ENCODE measurements at regions of chr6 and their contacts with region 1.

Region 1: GRCh38 chr6:90940812-90941481 is 354.1 kb upstream of the MAP3K7 start:
- DNase-seq: no peak
- ATAC-seq: peak; percentile 97
- H3K4me3 Mint-ChIP-seq: no peak overlapping the region
- H3K27ac Mint-ChIP-seq: peak overlapping the region; percentile 6
- H3K4me1 Mint-ChIP-seq: peaks cover 5% of the 10 kb centered on the region
- H3K27me3 Mint-ChIP-seq: no peaks in the 10 kb centered on the region

Region 2: DNA sequence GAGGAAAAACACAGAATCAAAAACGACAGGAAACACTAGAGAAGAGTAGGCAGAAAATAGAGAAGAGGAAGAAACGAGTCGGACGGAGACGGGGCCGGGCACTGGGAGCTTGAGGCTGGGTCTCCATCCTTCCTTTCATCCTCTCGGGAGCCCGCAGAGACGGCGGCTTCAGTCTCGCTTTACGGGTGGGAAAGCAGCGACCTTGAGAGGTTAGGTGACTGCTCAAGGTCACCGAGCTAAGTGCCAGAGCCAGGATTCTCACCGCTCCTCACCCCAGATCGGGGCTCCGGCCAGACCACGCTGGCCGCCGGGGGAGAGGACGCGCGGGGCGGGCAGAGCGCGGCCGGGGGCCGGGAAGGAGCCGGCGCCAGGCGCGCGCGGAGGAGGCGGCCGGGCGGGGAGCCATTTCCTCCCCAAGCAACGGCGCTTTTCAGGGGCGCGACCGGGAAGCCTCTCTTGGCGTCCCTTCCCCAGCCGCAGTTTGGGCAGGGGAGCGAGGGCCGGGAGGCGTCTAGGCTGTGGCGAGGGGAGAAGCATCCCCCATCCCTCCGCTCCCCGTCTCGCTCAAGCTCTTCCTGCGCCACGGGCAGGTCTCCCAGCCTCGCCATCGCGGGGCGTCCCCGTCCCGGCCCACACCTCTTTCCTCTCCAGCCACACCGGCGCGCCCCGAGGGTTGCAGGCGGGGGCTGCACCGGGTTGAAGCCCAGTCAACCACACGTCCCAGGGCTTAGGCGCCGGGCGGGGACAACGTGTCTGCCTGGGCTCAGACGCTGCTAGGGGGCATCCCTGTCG is 330.0 kb before region 1 on chr6:
- CTCF ChIA-PET with region 1: interaction called, 6 read pairs
- POLR2A ChIA-PET with region 1: no interaction called
- intact Hi-C with region 1: loop called in 1 of 2 experiments (anchors 2 kb)
- DNase-seq: peak; percentile 62
- ATAC-seq: peak; percentile 75
- H3K4me3 Mint-ChIP-seq: peak overlapping the region; percentile 69
- H3K27ac Mint-ChIP-seq: peak overlapping the region; percentile 12
- H3K4me1 Mint-ChIP-seq: peaks cover 9% of the 10 kb centered on the region
- H3K27me3 Mint-ChIP-seq: peaks cover 54% of the 10 kb centered on the region

Region 3: GRCh38 chr6:90928051-90928450 is 12.9 kb before region 1 on chr6:
- CTCF ChIA-PET with region 1: interaction called, 13 read pairs
- POLR2A ChIA-PET with region 1: no interaction called
- intact Hi-C with region 1: no loop called
- DNase-seq: no peak
- ATAC-seq: no peak
- H3K4me3 Mint-ChIP-seq: no peak overlapping the region
- H3K27ac Mint-ChIP-seq: no peak overlapping the region
- H3K4me1 Mint-ChIP-seq: peaks cover 5% of the 10 kb centered on the region
- H3K27me3 Mint-ChIP-seq: peaks cover 14% of the 10 kb centered on the region

Region 4: DNA sequence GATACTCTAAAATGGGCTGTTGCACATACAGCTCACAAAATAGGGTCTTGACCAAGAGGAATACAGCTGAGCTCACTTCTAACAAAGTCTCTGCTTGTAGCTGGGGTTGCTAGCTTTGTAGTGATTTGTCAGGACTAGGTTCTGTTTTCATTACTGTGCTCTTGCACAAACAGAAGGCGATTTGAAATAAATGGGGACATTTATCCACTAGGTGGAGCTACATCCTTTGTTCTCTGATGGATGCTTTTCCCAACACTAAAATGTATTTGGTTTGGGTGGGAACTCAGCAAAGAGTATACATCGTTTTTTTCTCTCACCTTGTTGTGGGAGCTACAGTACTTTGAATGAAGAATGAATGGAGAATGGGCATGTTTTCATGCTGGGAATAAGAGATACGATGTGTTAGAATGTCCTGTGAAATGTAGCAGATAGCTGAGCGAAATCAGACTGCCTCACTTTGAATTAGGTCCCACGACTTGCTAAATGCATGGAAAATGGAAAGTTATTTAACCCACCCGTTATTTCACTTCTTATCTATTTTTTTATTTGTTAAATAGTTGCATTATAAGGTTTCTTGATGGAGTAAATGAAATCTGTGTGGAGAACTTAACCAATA is 140.6 kb after region 1 on chr6:
- CTCF ChIA-PET with region 1: interaction called, 11 read pairs
- POLR2A ChIA-PET with region 1: no interaction called
- intact Hi-C with region 1: loop called in 1 of 2 experiments (anchors 1 kb)
- DNase-seq: no peak
- ATAC-seq: peak; percentile 26
- H3K4me3 Mint-ChIP-seq: no peak overlapping the region
- H3K27ac Mint-ChIP-seq: no peak overlapping the region
- H3K4me1 Mint-ChIP-seq: no peaks in the 10 kb centered on the region
- H3K27me3 Mint-ChIP-seq: no peaks in the 10 kb centered on the region

Region 5: GRCh38 chr6:92647625-92648024 is 1706.7 kb after region 1 on chr6:
- CTCF ChIA-PET with region 1: no interaction called
- POLR2A ChIA-PET with region 1: no interaction called
- intact Hi-C with region 1: loop called in 1 of 2 experiments (anchors 5 kb)
- DNase-seq: no peak
- ATAC-seq: no peak
- H3K4me3 Mint-ChIP-seq: no peak overlapping the region
- H3K27ac Mint-ChIP-seq: no peak overlapping the region
- H3K4me1 Mint-ChIP-seq: no peaks in the 10 kb centered on the region
- H3K27me3 Mint-ChIP-seq: no peaks in the 10 kb centered on the region